PC-9 (cell line): ENCODE measurements at regions of chr3 and their contacts with region 1.

Region 1: DNA sequence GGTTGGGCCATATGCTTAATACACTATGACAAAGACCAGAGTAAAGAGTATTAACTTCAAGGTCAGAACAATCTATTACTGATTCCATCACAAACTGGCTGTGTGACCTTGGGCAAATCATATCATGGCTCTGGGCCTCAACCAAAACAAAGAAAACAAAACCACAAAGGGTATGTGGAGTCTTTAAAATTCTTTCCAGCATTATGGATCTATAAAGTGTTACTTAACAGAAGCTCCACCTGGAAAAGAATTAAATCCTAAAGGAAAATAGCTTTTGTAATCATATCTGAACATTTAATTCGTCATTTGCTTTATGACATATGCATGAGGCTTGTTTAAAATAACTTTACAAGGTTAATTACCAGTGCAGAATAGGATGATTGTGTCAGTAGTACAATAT is 265.5 kb downstream of the SATB1 start:
- DNase-seq: no peak
- H3K4me3 ChIP-seq: no peak overlapping the region
- H3K27ac ChIP-seq: no peak overlapping the region
- H3K4me1 ChIP-seq: 0 out of 2 replicates have a peak, but pooled peaks cover 4% of the 10 kb centered on the region
- H3K27me3 ChIP-seq: no peaks in the 10 kb centered on the region
- CTCF ChIP-seq: no peak

Region 2: DNA sequence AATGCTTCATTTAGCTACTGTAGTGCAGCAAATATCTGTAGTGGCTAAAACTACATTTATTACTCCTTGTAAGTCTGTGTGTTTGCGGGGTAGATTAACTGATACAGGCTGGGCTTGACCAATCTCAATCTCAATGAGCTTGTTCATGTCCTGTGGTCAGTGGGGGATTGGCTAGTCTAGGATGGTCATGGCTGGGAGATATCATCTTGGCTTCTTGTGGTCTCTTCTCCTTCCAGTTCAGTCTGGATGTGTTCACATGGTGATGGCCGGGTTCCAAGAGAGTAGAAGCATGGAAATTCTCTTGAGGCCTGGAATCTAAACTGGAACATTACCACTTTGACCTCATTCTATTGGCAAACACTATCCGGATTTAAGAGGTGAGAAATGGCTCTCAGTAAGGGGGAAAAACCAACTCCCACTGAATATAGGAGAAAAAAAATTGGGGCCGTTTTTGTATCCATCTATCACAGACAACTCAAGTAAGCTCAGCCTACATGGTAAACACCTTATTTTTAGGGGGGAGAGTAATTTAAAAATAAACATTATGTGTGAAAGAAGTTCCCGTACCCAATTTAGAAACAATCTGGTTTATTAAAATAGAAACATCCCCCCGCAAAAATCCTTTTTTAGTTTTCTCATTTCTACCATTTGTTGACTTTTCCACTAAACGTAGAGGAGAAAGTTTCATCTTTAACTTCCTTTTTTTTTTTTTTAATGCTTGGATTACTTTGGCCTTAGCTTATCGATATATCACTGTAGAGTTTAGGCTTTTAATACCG is 132.3 kb before region 1 on chr3:
- CTCF ChIA-PET with region 1: interaction called, 12 read pairs
- POLR2A ChIA-PET with region 1: no interaction called
- intact Hi-C with region 1: no loop called
- DNase-seq: no peak
- H3K4me3 ChIP-seq: no peak overlapping the region
- H3K27ac ChIP-seq: no peak overlapping the region
- H3K4me1 ChIP-seq: no peaks in the 10 kb centered on the region
- H3K27me3 ChIP-seq: no peaks in the 10 kb centered on the region
- CTCF ChIP-seq: no peak